HEK293 (cell line): ENCODE measurements at regions of chr1 and their contacts with region 1.

Region 1: GRCh38 chr1:205977402-205978014 is 25.7 kb downstream of the RAB7B start:
- H3K4me3 ChIP-seq: no peak overlapping the region
- H3K27ac ChIP-seq: no peak overlapping the region
- H3K4me1 ChIP-seq: no peaks in the 10 kb centered on the region
- CTCF ChIP-seq: peak; percentile 88

Region 2: DNA sequence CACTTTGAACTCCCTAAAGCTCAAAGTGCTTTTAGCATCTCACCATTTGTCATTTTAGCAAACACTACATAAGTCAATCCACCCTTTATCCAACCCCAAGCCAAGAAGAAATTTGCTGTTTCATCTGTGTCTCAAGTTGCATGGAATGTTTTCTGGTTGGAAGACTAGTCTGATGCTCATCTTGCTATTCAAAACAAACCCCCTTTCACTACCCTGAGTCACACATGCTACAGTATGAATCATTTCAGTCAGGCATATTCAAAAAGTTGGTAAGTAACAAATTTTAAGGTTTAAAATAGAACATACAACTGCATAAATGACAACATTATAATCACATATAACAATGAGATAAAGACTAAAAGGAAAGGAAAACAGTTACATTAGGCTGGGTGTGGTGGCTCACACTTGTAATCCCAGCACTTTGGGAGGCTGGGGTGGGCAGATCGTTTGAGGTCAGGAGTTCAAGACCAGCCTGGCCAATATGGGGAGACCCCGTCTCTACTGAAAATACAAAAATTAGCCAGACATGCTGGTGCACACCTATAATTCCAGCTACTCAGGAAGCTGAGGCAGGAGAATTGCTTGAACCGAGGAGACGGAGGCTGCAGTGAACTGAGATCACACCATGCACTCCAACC is 804.7 kb before region 1 on chr1:
- CTCF ChIA-PET with region 1: no interaction called
- POLR2A ChIA-PET with region 1: no interaction called
- H3K4me3 ChIP-seq: no peak overlapping the region
- H3K27ac ChIP-seq: no peak overlapping the region
- H3K4me1 ChIP-seq: no peaks in the 10 kb centered on the region
- CTCF ChIP-seq: no peak

Region 3: DNA sequence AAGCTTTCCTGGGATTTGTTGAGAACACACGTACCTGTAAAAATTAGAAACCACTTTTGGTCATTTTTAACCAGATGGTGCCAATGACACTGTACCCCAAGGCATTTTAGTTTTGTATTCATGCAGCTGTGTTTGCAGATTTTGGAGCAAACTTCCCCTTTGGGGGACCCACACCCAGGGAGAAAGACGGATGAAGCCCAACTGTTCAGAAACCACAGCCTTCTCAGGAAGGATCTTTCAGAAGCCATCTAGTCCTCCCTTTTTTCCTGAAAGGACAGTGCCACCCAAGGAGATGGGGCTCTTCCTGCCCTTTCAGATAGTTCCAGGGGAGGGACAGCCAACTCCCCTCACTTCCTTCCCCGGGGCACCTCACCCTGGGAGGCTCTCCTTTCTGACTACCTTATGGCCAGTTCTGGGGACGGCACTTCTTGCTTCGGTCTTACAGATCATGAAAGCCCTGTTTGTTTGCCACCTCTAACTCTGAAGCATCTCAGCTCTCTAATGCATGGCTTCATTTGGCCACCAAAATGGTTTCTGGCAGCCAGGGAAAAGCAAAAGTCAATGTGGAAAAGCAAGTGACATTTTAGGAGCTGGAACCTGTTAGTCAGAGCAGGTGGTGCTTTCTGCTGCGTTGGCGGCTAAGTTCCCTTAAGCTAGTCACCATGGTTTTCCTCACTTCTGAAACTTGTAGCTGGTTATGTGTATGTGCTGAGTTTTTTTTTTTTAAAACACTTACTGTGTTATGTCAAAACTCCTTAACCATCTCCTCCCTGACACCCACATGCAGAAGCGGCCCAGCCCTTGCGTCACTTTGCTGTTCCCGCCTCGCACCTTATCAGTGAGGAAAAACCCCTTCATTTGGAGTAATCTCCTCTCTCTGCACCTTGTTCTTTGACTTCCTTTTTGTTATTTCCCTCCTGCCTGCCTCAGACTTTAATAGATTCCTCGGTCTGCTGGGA is 739.7 kb before region 1 on chr1:
- CTCF ChIA-PET with region 1: no interaction called
- POLR2A ChIA-PET with region 1: no interaction called
- H3K4me3 ChIP-seq: no peak overlapping the region
- H3K27ac ChIP-seq: no peak overlapping the region
- H3K4me1 ChIP-seq: no peaks in the 10 kb centered on the region
- CTCF ChIP-seq: no peak

Region 4: DNA sequence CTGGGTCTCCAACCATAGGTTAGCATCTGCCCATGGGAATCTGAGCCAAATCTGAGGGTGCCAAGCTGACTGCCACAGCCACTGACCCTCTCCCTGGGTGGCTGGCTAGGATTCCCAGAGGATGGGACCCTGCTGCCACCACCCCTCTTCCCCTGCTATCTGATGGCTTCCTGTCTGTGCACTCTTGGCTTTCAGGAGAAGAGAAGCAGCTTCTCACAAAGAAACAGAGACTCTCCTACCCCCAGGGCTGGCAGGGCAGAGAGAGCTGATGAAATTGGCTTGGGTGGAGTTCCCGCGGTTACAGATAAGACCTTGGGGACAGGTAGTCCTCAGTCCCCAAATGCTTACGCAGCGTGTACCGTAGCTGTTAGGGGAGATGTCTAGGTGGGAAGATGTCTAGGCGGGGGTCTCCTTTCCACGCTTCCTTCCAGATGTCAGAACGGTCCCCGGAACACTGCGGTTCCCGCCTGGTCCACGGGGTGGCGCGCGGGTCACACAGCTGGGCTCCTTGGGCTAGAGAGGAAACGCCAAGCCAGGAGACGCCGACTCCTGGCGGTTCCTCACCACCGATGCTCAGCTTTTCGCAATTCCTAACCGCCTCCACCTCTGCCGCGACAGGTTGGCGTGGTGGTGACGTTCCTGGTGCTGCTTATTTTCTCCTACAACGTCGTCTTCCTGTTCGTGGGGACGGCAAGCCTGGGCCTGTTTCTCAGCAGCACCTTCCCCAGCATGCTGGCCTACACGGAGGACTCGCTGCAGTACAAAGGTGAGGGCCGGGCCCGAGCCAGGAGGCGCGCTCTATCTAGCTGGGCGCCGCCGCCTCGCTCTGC is 385.8 kb before region 1 on chr1:
- CTCF ChIA-PET with region 1: interaction called, 12 read pairs
- POLR2A ChIA-PET with region 1: no interaction called
- H3K4me3 ChIP-seq: peak overlapping the region; percentile 12
- H3K27ac ChIP-seq: no peak overlapping the region
- H3K4me1 ChIP-seq: no peaks in the 10 kb centered on the region; the same call in 1 of the 2 replicates
- CTCF ChIP-seq: peak; percentile 98

Region 5: GRCh38 chr1:205791568-205792180 is 185.8 kb before region 1 on chr1:
- CTCF ChIA-PET with region 1: interaction called, 155 read pairs
- POLR2A ChIA-PET with region 1: interaction called, 5 read pairs
- H3K4me3 ChIP-seq: no peak overlapping the region
- H3K27ac ChIP-seq: no peak overlapping the region
- H3K4me1 ChIP-seq: 0 out of 2 replicates have a peak, but pooled peaks cover under 1% of the 10 kb centered on the region
- CTCF ChIP-seq: peak; percentile 79

Region 6: GRCh38 chr1:205919026-205919746 is 58.3 kb before region 1 on chr1:
- CTCF ChIA-PET with region 1: interaction called, 527 read pairs
- POLR2A ChIA-PET with region 1: interaction called, 18 read pairs
- H3K4me3 ChIP-seq: no peak overlapping the region
- H3K27ac ChIP-seq: no peak overlapping the region
- H3K4me1 ChIP-seq: no peaks in the 10 kb centered on the region
- CTCF ChIP-seq: peak; percentile 95

Region 7: DNA sequence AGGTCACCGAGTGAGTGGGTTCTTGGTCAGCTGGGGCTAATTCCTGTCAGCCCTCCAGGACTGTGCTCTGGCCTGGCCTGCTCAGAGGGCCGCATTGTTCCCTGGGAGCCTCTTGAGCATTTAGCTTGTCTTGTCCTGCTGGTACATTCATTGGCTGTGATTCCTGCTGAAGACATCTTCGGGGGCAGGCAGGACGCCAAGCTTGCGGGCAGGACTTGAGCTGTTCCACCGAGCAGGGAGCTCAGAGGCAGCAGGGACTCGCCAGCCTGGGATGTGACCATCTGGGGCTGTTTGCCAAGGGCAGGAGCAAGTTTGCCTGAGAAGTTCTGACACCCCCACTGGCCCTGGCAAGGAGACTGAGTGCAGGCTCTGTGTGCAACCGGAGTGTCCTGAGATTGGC is 27.2 kb before region 1 on chr1:
- CTCF ChIA-PET with region 1: interaction called, 20 read pairs
- POLR2A ChIA-PET with region 1: no interaction called
- H3K4me3 ChIP-seq: no peak overlapping the region
- H3K27ac ChIP-seq: no peak overlapping the region
- H3K4me1 ChIP-seq: no peaks in the 10 kb centered on the region
- CTCF ChIP-seq: no peak

Region 8: DNA sequence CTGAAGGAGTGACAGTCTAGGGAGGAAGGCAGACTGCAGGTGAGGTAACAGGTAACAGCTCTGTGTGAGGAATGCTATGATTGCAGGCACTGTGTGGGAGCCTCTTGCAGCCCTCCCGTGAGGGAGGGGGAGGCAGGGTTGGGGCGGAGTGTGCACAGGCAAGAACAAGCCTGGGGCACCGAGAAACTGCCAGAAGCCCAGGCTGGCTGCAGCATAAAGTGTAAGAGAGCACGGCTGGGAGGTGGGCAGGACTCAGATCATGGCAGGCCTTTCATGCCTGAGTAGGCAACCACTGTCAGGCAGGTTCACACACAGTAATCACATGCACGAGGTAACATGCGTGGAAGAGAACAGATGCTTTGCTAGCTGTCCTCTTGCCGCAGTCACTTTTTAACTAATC is 64.1 kb after region 1 on chr1:
- CTCF ChIA-PET with region 1: interaction called, 11 read pairs
- POLR2A ChIA-PET with region 1: interaction called, 4 read pairs
- H3K4me3 ChIP-seq: no peak overlapping the region
- H3K27ac ChIP-seq: no peak overlapping the region
- H3K4me1 ChIP-seq: no peaks in the 10 kb centered on the region
- CTCF ChIP-seq: no peak